ENCODE measurements at regions of chr4 and their contacts with region 1.

Region 1: GRCh38 chr4:120749445-120750151 is 172.9 kb downstream of the PRDM5 start:
- DNase-seq: peak; percentile 98
- H3K4me3 ChIP-seq: peak overlapping the region; percentile 42
- H3K27ac ChIP-seq: peak overlapping the region; percentile 97
- H3K4me1 ChIP-seq: peaks cover 42% of the 10 kb centered on the region
- CTCF ChIP-seq: no peak; the same call in 1 of the 2 replicates

Region 2: DNA sequence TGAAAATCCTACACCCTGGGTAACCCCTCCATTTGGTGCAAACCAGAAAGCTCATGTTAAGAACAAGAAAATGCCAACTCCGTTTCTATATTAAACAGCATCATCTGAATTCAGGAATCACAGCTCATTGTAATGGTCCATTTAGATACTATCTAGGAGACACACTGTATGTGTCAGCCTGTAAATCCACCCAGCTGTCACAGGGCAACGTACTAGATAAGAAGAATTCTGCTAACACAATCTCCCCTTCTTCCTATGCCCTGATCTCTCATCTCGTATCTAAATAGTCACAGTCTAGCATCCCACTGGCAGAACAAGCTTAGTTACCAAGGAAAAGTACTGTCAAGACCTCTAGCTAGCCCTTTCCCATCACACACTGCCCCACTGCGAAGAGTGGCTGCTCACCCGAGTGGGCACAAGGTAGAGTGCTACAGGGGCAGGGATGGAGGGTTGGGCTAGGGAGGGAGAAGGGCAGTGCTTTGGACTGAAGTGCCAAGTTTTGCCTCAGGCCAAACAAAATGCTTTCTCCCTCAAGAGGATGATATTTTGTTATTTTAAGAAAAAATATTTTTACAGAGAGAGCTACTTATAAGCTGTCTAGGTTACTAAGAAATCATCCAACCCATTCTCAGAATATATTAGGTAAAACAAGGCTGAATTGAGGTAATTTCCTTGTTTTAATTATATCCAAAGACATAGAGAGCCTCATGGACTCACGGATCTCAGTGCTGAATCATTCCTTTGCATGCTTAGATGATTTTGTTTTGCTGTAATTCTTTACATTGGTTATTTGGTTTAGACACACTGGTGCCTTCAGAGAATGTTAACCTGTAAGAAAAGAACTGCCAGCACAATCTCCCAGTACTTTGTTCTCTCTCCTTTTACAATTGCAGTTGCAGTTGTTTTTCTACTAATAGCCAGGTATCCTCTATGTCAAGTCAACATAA is 23.7 kb before region 1 on chr4:
- CTCF ChIA-PET with region 1: interaction called, 10 read pairs
- POLR2A ChIA-PET with region 1: interaction called, 34 read pairs
- intact Hi-C with region 1: loop called (anchors 2 kb)
- DNase-seq: no peak
- H3K4me3 ChIP-seq: no peak overlapping the region
- H3K27ac ChIP-seq: no peak overlapping the region
- H3K4me1 ChIP-seq: peaks cover 40% of the 10 kb centered on the region
- CTCF ChIP-seq: no peak

Region 3: DNA sequence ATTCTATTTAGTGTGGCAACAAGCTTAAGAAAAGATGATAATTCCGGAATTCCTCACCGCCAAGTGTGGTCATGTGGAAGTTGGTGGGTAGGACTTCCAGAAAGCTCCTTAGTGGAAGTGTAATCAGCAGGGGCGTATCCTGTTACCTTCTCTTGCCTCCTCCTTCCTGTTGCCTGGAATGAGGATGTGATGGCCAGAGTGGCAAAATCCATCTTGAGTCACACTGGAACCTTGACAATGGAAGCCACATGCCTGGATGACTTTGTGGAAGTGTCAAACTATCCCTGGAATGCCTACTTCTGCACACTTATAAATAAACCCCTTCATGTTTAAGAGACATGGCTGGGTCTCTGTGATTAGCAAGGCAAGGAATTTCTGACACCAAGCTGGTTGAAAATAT is 18.0 kb before region 1 on chr4:
- CTCF ChIA-PET with region 1: no interaction called
- POLR2A ChIA-PET with region 1: interaction called, 12 read pairs
- intact Hi-C with region 1: no loop called
- DNase-seq: no peak
- H3K4me3 ChIP-seq: no peak overlapping the region
- H3K27ac ChIP-seq: no peak overlapping the region
- H3K4me1 ChIP-seq: peaks cover 17% of the 10 kb centered on the region
- CTCF ChIP-seq: no peak

Region 4: DNA sequence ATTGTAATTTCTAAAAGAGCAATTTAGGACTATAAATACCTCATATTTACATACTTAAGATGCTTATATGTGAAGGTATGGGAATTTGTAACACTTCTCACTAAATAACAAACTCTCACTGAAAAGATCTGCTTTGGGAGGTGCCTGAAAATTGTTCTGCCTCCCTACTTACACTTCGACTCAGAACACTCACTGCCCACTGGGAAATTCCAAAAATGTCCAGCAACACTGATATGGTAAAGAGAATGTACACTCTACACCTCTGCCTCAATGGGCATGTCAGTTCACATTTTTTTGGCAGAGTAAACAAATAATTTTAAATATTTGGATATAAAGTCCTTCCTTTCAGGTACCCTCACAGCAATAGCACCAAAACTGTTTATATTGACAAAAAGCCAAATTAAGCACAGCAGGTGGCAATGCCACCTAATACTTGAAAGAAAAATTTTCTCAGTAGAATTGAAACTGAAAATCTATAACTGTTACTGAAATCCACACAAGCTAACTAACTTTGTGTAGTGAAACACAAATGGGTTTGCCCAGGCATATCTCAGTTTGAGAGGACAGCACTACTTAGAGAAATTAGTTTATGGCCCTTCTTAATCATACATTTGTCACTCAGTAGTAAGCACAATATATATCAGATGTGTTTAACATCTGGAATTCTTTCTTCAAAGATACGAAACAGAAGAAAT is 105.9 kb after region 1 on chr4:
- CTCF ChIA-PET with region 1: no interaction called
- POLR2A ChIA-PET with region 1: interaction called, 6 read pairs
- intact Hi-C with region 1: loop called (anchors 2 kb)
- DNase-seq: peak; percentile 30
- H3K4me3 ChIP-seq: no peak overlapping the region
- H3K27ac ChIP-seq: no peak overlapping the region
- H3K4me1 ChIP-seq: peaks cover 33% of the 10 kb centered on the region
- CTCF ChIP-seq: no peak

Region 5: DNA sequence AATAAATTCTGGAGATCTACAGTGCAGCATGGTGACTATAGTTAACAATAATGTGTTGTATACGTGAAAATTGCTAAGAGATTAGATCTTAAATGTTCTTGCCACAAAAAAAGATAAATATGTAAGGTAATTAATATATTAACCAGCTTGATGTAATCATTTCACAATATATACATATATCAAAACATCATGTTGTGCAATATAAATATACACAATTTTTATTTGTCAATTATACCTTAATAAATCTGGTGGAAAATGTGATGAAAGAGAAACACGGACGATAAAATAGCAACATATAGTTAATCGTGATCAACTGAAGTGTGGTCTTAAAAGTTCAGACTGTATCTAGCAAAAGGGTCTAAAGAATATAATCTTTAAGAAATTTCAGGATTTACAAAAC is 339.3 kb after region 1 on chr4:
- CTCF ChIA-PET with region 1: no interaction called
- POLR2A ChIA-PET with region 1: no interaction called
- intact Hi-C with region 1: no loop called
- DNase-seq: no peak
- H3K4me3 ChIP-seq: no peak overlapping the region
- H3K27ac ChIP-seq: no peak overlapping the region
- H3K4me1 ChIP-seq: no peaks in the 10 kb centered on the region
- CTCF ChIP-seq: no peak

Measured in OCI-LY7 (cell line).